PC-3 (cell line): ENCODE measurements at regions of chr4 and their contacts with region 1.

Region 1: GRCh38 chr4:116702951-116703350 is 382.4 kb downstream of the TRAM1L1 start:
- DNase-seq: peak; percentile 43
- ATAC-seq: peak; percentile 70
- H3K4me3 ChIP-seq: no peak overlapping the region
- H3K27ac ChIP-seq: no peak overlapping the region
- H3K4me1 ChIP-seq: no peaks in the 10 kb centered on the region
- H3K27me3 ChIP-seq: no peaks in the 10 kb centered on the region
- CTCF ChIP-seq: peak; percentile 51; the same call in 1 of the 2 replicates

Region 2: GRCh38 chr4:116073051-116073450 is 629.9 kb before region 1 on chr4:
- CTCF ChIA-PET with region 1: interaction called, 20 read pairs
- POLR2A ChIA-PET with region 1: no interaction called
- intact Hi-C with region 1: no loop called
- DNase-seq: peak; percentile 16
- ATAC-seq: no peak
- H3K4me3 ChIP-seq: no peak overlapping the region
- H3K27ac ChIP-seq: no peak overlapping the region
- H3K4me1 ChIP-seq: peaks cover 10% of the 10 kb centered on the region
- H3K27me3 ChIP-seq: no peaks in the 10 kb centered on the region
- CTCF ChIP-seq: no peak

Region 3: GRCh38 chr4:116358588-116359222 is 344.2 kb before region 1 on chr4:
- CTCF ChIA-PET with region 1: no interaction called
- POLR2A ChIA-PET with region 1: no interaction called
- intact Hi-C with region 1: loop called (anchors 1 kb)
- DNase-seq: peak; percentile 94
- ATAC-seq: peak; percentile 94
- H3K4me3 ChIP-seq: no peak overlapping the region
- H3K27ac ChIP-seq: no peak overlapping the region
- H3K4me1 ChIP-seq: no peaks in the 10 kb centered on the region
- H3K27me3 ChIP-seq: no peaks in the 10 kb centered on the region
- CTCF ChIP-seq: peak; percentile 66